H1 (cell line): ENCODE measurements at regions of chr11 and their contacts with region 1.

Region 1: GRCh38 chr11:6022956-6023355 is 7.6 kb downstream of the OR56A1 start:
- DNase-seq: no peak
- H3K4me3 ChIP-seq: no peak overlapping the region
- H3K27ac ChIP-seq: no peak overlapping the region
- H3K4me1 ChIP-seq: no peaks in the 10 kb centered on the region
- H3K27me3 ChIP-seq: no peaks in the 10 kb centered on the region
- CTCF ChIP-seq: peak in 2 of 3 experiments; percentile 70 to 81; a peak in 3 of 4 replicates
- EP300 ChIP-seq: no peak
- POLR2A ChIP-seq: no peak
- RAD21 ChIP-seq: peak; percentile 95 to 97

Region 2: GRCh38 chr11:6099577-6099976 is 76.6 kb after region 1 on chr11:
- CTCF ChIA-PET with region 1: interaction called, 11 read pairs
- POLR2A ChIA-PET with region 1: no interaction called
- DNase-seq: no peak
- H3K4me3 ChIP-seq: no peak overlapping the region
- H3K27ac ChIP-seq: no peak overlapping the region
- H3K4me1 ChIP-seq: no peaks in the 10 kb centered on the region
- H3K27me3 ChIP-seq: no peaks in the 10 kb centered on the region
- CTCF ChIP-seq: peak; percentile 28 to 57 (median 50)
- EP300 ChIP-seq: no peak
- POLR2A ChIP-seq: no peak
- RAD21 ChIP-seq: peak; percentile 46 to 60